ENCODE measurements at regions of chr15 and their contacts with region 1.

Region 1: GRCh38 chr15:31326156-31326732 is 391 bp upstream of the KLF13 start:
- DNase-seq: peak; percentile 98
- H3K4me3 ChIP-seq: peak overlapping the region; percentile 53 to 89 (median 62)
- H3K27ac ChIP-seq: peak overlapping the region; percentile 78
- H3K4me1 ChIP-seq: peaks cover 8% of the 10 kb centered on the region
- H3K27me3 ChIP-seq: peaks cover 0 to 2% of the 10 kb centered on the region in 2 experiments
- CTCF ChIP-seq: no peak
- POLR2A ChIP-seq: peak; percentile 68

Region 2: GRCh38 chr15:29680465-29681165 is 1645.6 kb before region 1 on chr15:
- CTCF ChIA-PET with region 1: no interaction called
- POLR2A ChIA-PET with region 1: no interaction called
- dilution Hi-C with region 1: no loop called
- intact Hi-C with region 1: loop called (anchors 5 kb)
- DNase-seq: peak; percentile 29
- H3K4me3 ChIP-seq: no peak overlapping the region
- H3K27ac ChIP-seq: no peak overlapping the region
- H3K4me1 ChIP-seq: peaks cover 17% of the 10 kb centered on the region
- H3K27me3 ChIP-seq: no peaks in the 10 kb centered on the region
- CTCF ChIP-seq: no peak
- POLR2A ChIP-seq: no peak

Region 3: GRCh38 chr15:31236184-31237042 is 89.8 kb before region 1 on chr15:
- CTCF ChIA-PET with region 1: no interaction called
- POLR2A ChIA-PET with region 1: no interaction called
- dilution Hi-C with region 1: no loop called
- intact Hi-C with region 1: loop called (anchors 5 kb)
- DNase-seq: peak; percentile 81
- H3K4me3 ChIP-seq: no peak overlapping the region
- H3K27ac ChIP-seq: no peak overlapping the region
- H3K4me1 ChIP-seq: no peaks in the 10 kb centered on the region
- H3K27me3 ChIP-seq: no peaks in the 10 kb centered on the region
- CTCF ChIP-seq: peak in 1 of 2 donors; percentile 4
- POLR2A ChIP-seq: no peak

Region 4: GRCh38 chr15:31352911-31353811 is 26.9 kb after region 1 on chr15:
- CTCF ChIA-PET with region 1: no interaction called
- POLR2A ChIA-PET with region 1: no interaction called
- dilution Hi-C with region 1: no loop called
- intact Hi-C with region 1: loop called (anchors 1 kb)
- DNase-seq: peak; percentile 90
- H3K4me3 ChIP-seq: no peak overlapping the region
- H3K27ac ChIP-seq: peak overlapping the region; percentile 51
- H3K4me1 ChIP-seq: peaks cover 13% of the 10 kb centered on the region
- H3K27me3 ChIP-seq: no peaks in the 10 kb centered on the region
- CTCF ChIP-seq: no peak
- POLR2A ChIP-seq: no peak

Region 5: DNA sequence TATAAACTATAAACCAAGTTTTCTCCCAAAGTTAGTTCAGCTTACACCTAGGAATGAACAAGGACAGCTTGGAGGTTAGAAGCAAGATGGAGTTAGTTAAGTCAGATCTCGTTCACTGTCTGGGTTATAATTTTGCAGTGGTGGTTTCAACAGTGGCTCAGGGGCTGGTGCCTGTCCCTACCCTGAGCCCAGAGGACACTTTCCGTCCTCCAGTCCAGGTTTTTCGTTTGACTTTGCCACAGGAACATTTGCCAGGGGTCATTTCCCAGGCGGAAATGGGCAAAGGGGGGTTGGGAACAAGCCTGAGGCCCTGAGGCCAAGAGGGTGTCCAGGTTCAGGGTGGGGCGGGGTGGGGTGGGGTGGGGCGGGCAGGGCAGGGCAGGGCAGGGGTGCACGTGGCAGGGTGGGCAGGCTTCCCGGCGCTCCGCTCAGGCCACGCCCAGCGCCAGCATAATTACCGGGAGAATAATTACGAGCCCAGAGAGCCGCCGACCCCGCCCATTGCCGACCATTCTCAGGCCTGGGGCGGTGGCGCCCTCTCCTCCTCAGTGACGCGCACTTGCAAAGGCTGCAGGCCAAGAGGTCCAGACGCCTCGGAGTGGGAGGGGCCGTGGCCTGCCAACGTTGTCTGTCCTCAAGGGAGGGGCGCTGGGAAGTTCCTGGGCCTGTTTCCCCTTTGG is 70.8 kb after region 1 on chr15:
- CTCF ChIA-PET with region 1: interaction called, 3 read pairs
- POLR2A ChIA-PET with region 1: interaction called, 3 read pairs
- dilution Hi-C with region 1: no loop called
- intact Hi-C with region 1: loop called (anchors 1 kb)
- DNase-seq: peak; percentile 67
- H3K4me3 ChIP-seq: no peak overlapping the region
- H3K27ac ChIP-seq: peak overlapping the region; percentile 38
- H3K4me1 ChIP-seq: peaks cover 20% of the 10 kb centered on the region
- H3K27me3 ChIP-seq: no peaks in the 10 kb centered on the region
- CTCF ChIP-seq: no peak
- POLR2A ChIP-seq: no peak

Region 6: GRCh38 chr15:31488426-31489204 is 162.4 kb after region 1 on chr15:
- CTCF ChIA-PET with region 1: interaction called, 34 read pairs
- POLR2A ChIA-PET with region 1: no interaction called
- dilution Hi-C with region 1: no loop called
- intact Hi-C with region 1: loop called (anchors 1 kb)
- DNase-seq: peak; percentile 81
- H3K4me3 ChIP-seq: no peak overlapping the region
- H3K27ac ChIP-seq: no peak overlapping the region
- H3K4me1 ChIP-seq: peaks cover 5% of the 10 kb centered on the region
- H3K27me3 ChIP-seq: peaks cover 13 to 18% of the 10 kb centered on the region in 2 experiments
- CTCF ChIP-seq: peak; percentile 84 to 90
- POLR2A ChIP-seq: no peak

Measured in endothelial cell of umbilical vein (primary cell).